Posterior vena cava (tissue), 2 donors: ENCODE measurements at regions of chr5 and their contacts with region 1.

Region 1: GRCh38 chr5:174644436-174644835 is 79.9 kb upstream of the MSX2 start:
- DNase-seq: no peak

Region 2: GRCh38 chr5:174204535-174205313 is 439.7 kb before region 1 on chr5:
- intact Hi-C with region 1: no loop called
- DNase-seq: no peak

Region 3: DNA sequence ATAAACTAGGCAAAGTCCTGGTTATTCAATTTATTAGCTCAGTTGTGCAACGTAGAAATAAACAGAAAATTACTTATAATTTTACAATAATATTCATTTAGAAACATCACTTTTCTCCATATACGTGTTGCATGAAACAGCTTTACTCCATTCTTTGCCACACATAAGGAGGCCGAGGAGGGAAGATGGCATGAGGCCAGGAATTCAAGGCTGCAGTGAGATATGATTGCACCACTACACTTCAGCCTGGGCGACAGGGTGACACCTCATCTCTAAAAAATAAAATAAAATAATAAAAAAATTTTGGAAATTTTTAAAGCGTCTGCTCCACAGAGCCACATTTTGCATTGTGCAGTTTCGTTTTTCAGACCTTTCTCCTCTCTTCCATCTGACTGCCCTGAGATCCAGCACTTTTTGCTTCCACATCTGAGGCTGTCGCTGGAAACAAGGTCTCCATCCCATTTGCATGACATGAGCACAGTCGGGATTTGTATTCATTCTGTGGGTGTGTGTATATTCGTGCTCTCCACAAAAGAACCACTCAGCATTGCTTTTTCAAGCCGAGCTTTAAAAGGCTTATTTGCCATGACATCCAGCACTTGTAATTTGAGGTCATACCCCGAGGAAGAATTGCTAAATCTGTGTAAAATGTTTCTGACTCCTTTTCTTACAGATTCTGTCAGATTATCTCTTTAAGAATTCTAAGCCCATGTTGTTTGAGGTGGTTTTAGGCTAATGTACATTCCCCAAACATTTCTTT is 18.7 kb before region 1 on chr5:
- intact Hi-C with region 1: loop called in 1 of 2 experiments (anchors 2 kb)
- DNase-seq: no peak